A673 (cell line): ENCODE measurements at regions of chr10 and their contacts with region 1.

Region 1: DNA sequence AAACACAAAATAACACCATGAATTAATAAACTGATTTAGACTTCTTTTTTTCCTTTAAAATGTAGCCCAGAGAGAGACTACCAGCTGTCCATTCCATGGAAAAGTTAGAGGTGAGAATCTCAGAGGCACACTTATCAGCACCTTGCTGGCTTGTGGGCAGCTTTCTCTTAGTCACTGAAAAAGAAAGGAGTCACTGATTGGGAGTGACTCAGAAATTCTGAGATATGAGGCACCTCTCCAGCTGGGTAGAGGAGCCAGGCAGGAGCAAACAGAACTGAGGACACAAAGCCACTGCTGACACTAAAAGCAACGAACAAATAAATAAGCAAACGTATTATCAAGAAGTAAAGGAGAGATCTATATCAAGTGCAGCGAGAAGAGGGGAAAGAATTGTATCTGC is 310.6 kb downstream of the PARD3 start:
- DNase-seq: no peak
- H3K4me3 ChIP-seq: no peak overlapping the region
- H3K27ac ChIP-seq: no peak overlapping the region
- H3K4me1 ChIP-seq: no peaks in the 10 kb centered on the region
- H3K27me3 ChIP-seq: no peaks in the 10 kb centered on the region
- CTCF ChIP-seq: no peak

Region 2: GRCh38 chr10:33509231-33509831 is 995.2 kb before region 1 on chr10:
- CTCF ChIA-PET with region 1: no interaction called
- POLR2A ChIA-PET with region 1: no interaction called
- intact Hi-C with region 1: no loop called
- DNase-seq: peak; percentile 45
- H3K4me3 ChIP-seq: no peak overlapping the region
- H3K27ac ChIP-seq: no peak overlapping the region
- H3K4me1 ChIP-seq: peaks cover 8% of the 10 kb centered on the region
- H3K27me3 ChIP-seq: no peaks in the 10 kb centered on the region
- CTCF ChIP-seq: no peak

Region 3: DNA sequence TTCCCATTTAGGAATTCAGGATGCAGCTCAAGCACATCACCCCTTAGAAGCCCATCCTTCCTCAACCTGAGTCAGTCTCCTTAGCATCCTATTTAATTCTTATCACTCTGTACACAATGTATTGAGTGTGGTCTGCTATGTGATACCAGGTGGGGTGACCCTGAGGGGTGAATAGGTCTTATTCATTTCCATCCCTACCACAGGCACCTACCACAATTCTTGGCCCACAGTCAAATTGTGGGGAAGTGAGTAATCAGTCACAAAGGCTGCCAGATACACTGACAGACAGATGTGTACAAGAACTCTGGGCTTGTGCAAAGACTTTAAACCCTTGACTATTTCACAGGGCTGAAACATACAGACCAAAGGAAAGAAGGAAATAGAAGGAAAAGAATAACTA is 249.9 kb before region 1 on chr10:
- CTCF ChIA-PET with region 1: no interaction called
- POLR2A ChIA-PET with region 1: no interaction called
- intact Hi-C with region 1: loop called (anchors 10 kb)
- DNase-seq: peak; percentile 28
- H3K4me3 ChIP-seq: no peak overlapping the region
- H3K27ac ChIP-seq: no peak overlapping the region
- H3K4me1 ChIP-seq: peaks cover 9% of the 10 kb centered on the region
- H3K27me3 ChIP-seq: no peaks in the 10 kb centered on the region
- CTCF ChIP-seq: no peak